ENCODE measurements at regions of chr18 and their contacts with region 1.

Region 1: GRCh38 chr18:58615140-58616132 is 13.5 kb downstream of the ALPK2 start:
- DNase-seq: peak; percentile 64
- H3K4me3 Mint-ChIP-seq: peak overlapping the region; percentile 26
- H3K27ac Mint-ChIP-seq: peak overlapping the region; percentile 85
- H3K4me1 Mint-ChIP-seq: peaks cover 34% of the 10 kb centered on the region
- H3K27me3 Mint-ChIP-seq: peaks cover 27% of the 10 kb centered on the region

Region 2: GRCh38 chr18:58541789-58542425 is 73.5 kb before region 1 on chr18:
- intact Hi-C with region 1: loop called (anchors 1 kb)
- DNase-seq: peak; percentile 30
- H3K4me3 Mint-ChIP-seq: no peak overlapping the region
- H3K27ac Mint-ChIP-seq: peak overlapping the region; percentile 71
- H3K4me1 Mint-ChIP-seq: peaks cover 58% of the 10 kb centered on the region
- H3K27me3 Mint-ChIP-seq: peaks cover 28% of the 10 kb centered on the region

Region 3: GRCh38 chr18:58572181-58572580 is 43.3 kb before region 1 on chr18:
- intact Hi-C with region 1: loop called (anchors 2 kb)
- DNase-seq: no peak
- H3K4me3 Mint-ChIP-seq: no peak overlapping the region
- H3K27ac Mint-ChIP-seq: peak overlapping the region; percentile 10
- H3K4me1 Mint-ChIP-seq: peaks cover 20% of the 10 kb centered on the region
- H3K27me3 Mint-ChIP-seq: peaks cover 4% of the 10 kb centered on the region

Region 4: GRCh38 chr18:58649966-58650816 is 34.8 kb after region 1 on chr18:
- intact Hi-C with region 1: loop called (anchors 1 kb)
- DNase-seq: peak; percentile 30
- H3K4me3 Mint-ChIP-seq: peak overlapping the region; percentile 11
- H3K27ac Mint-ChIP-seq: no peak overlapping the region
- H3K4me1 Mint-ChIP-seq: peaks cover 45% of the 10 kb centered on the region
- H3K27me3 Mint-ChIP-seq: no peaks in the 10 kb centered on the region

Region 5: DNA sequence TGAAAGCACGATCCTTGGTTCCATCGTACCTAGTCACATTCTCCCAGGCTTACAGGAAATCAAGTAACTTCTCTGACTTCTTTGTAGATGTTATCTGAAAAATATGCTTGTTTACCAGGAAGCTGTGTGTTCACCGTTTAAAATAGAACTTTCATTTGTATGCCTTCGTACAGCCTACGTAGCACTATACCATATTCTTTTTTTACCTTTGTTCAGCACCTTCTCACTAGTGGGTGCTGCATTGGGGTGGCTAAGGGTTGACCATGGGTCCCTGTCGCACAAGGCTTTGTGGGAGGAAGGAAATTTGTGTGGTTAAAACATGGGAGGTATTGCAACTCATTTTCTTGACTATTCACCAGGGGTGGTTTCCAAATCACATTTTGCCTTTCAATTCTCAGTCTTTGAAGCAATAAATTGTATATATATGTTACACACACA is 72.5 kb after region 1 on chr18:
- intact Hi-C with region 1: loop called (anchors 1 kb)
- DNase-seq: peak; percentile 67
- H3K4me3 Mint-ChIP-seq: peak overlapping the region; percentile 50
- H3K27ac Mint-ChIP-seq: peak overlapping the region; percentile 86
- H3K4me1 Mint-ChIP-seq: peaks cover 34% of the 10 kb centered on the region
- H3K27me3 Mint-ChIP-seq: no peaks in the 10 kb centered on the region